OCI-LY7 (cell line): ENCODE measurements at regions of chr1 and their contacts with region 1.

Region 1: GRCh38 chr1:84506002-84506728 is at the starts of genes GNG5 and SPATA1:
- DNase-seq: peak; percentile 96
- H3K4me3 ChIP-seq: peak within 1 kb of the TSS; percentile 91
- H3K27ac ChIP-seq: peak within 1 kb of the TSS; percentile 87
- H3K4me1 ChIP-seq: peaks cover 33% of the 10 kb centered on the region
- CTCF ChIP-seq: no peak
- total RNA-seq, gene GNG5: 25.7 and 45.1 TPM in 2 replicates
- total RNA-seq, gene SPATA1: 4.7 and 4.8 TPM in 2 replicates

Region 2: GRCh38 chr1:84077476-84078107 is 428.6 kb before region 1 on chr1:
- CTCF ChIA-PET with region 1: no interaction called
- POLR2A ChIA-PET with region 1: no interaction called
- intact Hi-C with region 1: loop called (anchors 2 kb)
- DNase-seq: peak; percentile 89
- H3K4me3 ChIP-seq: peak overlapping the region; percentile 80
- H3K27ac ChIP-seq: peak overlapping the region; percentile 32
- H3K4me1 ChIP-seq: peaks cover 15% of the 10 kb centered on the region
- CTCF ChIP-seq: no peak

Region 3: DNA sequence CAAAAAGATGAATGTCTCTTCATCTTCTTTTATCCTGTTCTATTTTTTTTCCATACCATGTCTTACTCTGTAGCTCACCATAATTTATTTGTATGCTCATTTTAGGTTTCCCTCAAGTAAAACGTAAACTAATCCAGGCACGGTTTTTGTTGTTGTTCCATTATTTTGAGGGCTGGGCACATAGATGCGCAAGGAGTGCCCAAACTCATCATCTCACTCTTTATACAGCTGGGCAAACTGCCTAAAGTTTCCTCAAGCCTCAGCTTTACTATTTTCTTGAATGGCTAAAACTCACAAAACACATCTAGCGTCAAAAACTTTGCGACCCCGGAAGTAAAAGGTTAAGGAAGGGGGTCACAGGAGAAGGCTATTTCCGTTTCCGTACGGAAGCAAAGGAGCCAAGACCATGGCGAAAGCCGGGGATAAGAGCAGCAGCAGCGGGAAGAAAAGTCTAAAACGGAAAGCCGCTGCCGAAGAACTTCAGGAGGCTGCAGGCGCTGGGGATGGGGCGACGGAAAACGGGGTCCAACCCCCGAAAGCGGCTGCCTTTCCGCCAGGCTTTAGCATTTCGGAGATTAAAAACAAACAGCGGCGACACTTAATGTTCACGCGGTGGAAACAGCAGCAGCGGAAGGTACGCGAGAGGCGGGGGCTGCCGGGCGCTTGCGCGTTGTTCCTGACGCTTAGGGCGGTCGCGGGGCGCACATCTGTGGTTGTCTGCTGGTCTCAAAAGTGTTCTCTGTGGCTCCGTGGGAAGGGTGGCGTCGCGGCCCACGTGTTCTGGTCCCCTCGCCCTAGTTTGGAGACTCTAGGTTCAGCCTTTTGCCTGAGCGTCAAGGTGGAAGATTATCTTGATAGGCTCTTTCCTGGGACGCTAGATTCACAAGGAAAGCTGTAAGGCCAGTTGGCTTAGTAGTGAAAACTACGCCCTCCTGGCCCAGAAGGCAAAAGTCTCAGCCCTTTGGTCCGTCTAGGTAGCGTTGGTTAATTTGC is 27.0 kb before region 1 on chr1 and contains the start of gene RPF1:
- CTCF ChIA-PET with region 1: no interaction called
- POLR2A ChIA-PET with region 1: interaction called, 43 read pairs
- intact Hi-C with region 1: loop called (anchors 2 kb)
- DNase-seq: peak; percentile 88
- H3K4me3 ChIP-seq: peak within 1 kb of the TSS; percentile 77
- H3K27ac ChIP-seq: peak within 1 kb of the TSS; percentile 63
- H3K4me1 ChIP-seq: peaks cover 21% of the 10 kb centered on the region
- CTCF ChIP-seq: peak; percentile 23; the same call in 1 of the 2 replicates
- total RNA-seq, gene RPF1: 56.3 and 57.9 TPM in 2 replicates

Region 4: GRCh38 chr1:84573967-84574842 is 68.0 kb after region 1 on chr1 and contains the start of gene CTBS:
- CTCF ChIA-PET with region 1: no interaction called
- POLR2A ChIA-PET with region 1: interaction called, 13 read pairs
- intact Hi-C with region 1: loop called (anchors 1 kb)
- DNase-seq: peak; percentile 95
- H3K4me3 ChIP-seq: peak within 1 kb of the TSS; percentile 72
- H3K27ac ChIP-seq: peak within 1 kb of the TSS; percentile 81
- H3K4me1 ChIP-seq: peaks cover 20% of the 10 kb centered on the region
- CTCF ChIP-seq: no peak
- total RNA-seq, gene CTBS: 4.5 and 5.9 TPM in 2 replicates

Region 5: DNA sequence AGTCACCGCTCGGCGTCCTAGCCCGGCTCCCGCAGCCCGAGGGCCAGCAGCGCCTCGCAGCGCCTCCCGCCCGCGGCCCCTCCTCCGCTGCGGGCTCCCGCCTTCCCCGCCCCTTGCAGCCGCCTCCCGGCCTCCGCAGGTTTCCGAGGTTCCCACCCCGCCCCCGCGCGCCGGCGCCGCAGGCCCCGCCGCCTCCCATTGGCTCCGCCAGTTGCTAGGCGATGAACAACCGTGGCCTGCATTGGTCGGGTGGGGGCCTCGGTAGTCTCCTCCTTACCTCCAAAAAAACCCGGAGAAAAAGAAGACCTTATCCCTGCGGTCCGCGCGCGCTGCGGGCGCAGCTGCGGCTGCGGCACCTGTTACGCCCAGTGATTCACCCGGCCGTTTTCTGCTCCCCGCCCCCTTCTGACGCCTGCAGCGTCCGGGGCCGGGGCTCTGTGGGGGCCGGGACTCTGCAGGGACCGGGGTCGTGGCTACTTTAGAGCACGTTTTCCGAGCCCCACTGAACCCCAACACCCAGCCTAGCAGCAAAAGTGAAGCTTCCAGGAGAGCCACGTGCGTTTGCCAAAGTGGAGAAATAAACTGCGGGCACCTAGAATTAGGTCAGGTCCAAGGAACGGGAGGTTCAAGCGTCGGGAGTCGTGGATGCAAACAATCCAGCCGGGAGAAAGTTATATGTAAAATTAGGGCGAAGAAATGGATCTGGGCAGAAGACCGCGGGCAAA is 184.4 kb after region 1 on chr1 and contains the start of gene SSX2IP:
- CTCF ChIA-PET with region 1: no interaction called
- POLR2A ChIA-PET with region 1: interaction called, 6 read pairs
- intact Hi-C with region 1: loop called (anchors 1 kb)
- DNase-seq: peak; percentile 97
- H3K4me3 ChIP-seq: peak within 1 kb of the TSS; percentile 84
- H3K27ac ChIP-seq: peak within 1 kb of the TSS; percentile 77
- H3K4me1 ChIP-seq: peaks cover 48% of the 10 kb centered on the region
- CTCF ChIP-seq: no peak
- total RNA-seq, gene SSX2IP: 24.1 and 29.9 TPM in 2 replicates

Region 6: DNA sequence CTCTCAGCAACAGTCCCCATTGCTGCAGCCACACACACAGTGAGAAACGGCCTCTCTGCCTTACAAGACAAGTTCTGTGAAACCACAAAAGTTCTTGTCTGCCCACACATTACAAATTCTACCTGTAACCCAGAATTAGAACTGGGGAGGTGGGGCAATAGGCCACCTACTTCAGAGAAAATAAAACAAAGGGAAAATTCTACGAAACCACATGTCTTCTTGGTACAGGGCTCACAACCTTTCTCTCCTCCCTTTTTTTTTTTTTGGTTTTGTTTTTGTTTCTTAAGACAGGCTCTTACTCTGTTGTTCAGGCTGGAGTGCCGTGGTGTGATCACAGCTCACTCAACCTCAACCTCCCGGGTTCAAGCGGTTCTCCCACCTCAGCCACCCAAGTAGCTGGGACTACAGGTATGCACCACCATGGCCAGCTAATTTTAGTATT is 356.7 kb after region 1 on chr1:
- CTCF ChIA-PET with region 1: no interaction called
- POLR2A ChIA-PET with region 1: no interaction called
- intact Hi-C with region 1: no loop called
- DNase-seq: no peak
- H3K4me3 ChIP-seq: no peak overlapping the region
- H3K27ac ChIP-seq: no peak overlapping the region
- H3K4me1 ChIP-seq: no peaks in the 10 kb centered on the region
- CTCF ChIP-seq: no peak